Activated CD4-positive, alpha-beta memory T cell treated with anti-CD3 and anti-CD28 coated beads for 36 hours (primary cell): ENCODE measurements at regions of chr9 and their contacts with region 1.

Region 1: DNA sequence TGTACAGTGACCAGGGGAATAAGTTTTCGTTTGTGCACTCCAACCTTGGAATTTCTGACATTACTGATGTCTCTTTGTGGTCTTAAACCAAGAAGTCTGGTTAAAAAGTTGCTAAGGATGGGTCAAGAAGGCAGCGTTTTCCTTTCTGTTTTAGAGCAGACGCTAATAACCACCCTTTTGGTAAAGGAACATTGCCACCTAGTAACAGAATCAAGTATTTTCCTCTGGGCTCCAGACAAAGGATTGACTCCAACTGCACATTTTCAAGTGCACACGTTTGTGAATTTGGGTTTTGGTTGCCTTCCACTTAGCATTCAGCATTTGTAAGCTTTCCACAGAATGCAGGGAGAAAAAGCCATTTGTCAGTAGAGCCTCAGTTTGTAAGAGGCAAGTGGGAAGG is 22.2 kb upstream of the CEP78 start:
- DNase-seq: no peak
- H3K4me3 Mint-ChIP-seq: no peak overlapping the region
- H3K27ac Mint-ChIP-seq: no peak overlapping the region
- H3K4me1 Mint-ChIP-seq: peaks cover 40% of the 10 kb centered on the region
- H3K27me3 Mint-ChIP-seq: no peaks in the 10 kb centered on the region

Region 2: DNA sequence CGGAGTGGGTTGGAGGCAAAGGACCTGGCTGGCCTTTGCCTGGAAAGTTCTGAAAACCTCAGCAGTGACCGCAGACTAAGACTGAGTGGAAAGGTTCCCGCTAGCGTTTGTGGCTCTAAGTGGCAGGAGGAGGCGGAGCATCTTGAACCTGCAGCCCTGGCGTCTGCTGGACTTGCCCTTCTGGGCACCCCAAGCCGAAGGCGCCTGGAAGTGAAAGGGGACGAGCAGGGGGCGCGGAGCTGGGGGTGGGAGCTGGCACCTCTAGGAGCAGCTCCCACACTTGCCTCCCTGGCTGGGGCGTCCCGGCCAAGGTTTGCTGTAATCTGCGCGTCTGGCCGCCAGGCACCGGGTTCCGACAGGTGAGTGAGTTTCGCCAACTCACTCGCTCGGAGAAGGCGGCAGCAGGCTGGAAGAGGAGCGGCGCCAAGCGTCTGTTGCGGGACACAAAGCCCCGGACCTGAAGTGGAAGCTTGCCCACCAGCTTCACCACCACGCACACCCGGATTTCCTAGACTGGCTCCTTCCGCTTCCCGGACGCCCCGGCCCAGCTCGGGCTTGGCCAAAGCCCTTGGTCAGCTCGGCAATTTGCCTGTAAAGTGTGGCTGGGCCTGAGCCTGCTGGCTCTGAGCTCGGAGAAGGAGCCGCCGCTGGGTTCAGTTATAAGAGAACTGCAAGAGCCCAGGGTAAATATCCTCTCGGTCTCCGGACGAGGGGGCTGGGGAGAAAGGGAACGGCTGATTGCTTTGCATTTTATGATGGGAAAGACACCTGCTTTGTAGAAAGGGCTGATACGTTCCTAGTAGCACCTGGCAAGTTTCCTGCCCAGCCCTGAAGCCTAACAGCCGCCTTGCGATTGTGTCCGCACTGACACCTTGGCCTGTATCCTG is 565.2 kb before region 1 on chr9 and contains the start of gene GNA14:
- CTCF ChIA-PET with region 1: no interaction called
- POLR2A ChIA-PET with region 1: no interaction called
- intact Hi-C with region 1: loop called (anchors 5 kb)
- DNase-seq: peak; percentile 18
- H3K4me3 Mint-ChIP-seq: peak within 1 kb of the TSS; percentile 65
- H3K27ac Mint-ChIP-seq: no peak within 1 kb of the TSS
- H3K4me1 Mint-ChIP-seq: peaks cover 14% of the 10 kb centered on the region
- H3K27me3 Mint-ChIP-seq: peaks cover 35% of the 10 kb centered on the region
- total RNA-seq, gene GNA14: not detected

Region 3: DNA sequence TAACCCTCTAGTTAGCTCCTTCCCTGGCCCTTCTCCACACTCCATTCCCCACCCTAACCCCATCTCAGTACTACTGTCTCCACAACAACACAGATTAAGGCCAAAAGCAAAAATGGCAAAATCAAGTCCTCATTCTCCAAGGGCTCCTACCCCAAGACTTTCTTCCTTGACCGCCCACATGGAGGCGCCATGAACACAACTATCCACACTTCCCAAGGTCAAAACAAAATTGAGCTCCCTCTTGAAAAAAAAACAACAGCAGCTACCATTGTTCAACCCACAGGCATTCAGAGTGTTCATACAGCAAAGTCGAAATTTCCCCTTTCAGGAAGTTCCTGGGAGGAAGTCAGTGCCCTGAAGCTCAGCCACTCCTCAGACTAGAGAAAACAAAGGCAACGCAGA is 236.5 kb before region 1 on chr9:
- CTCF ChIA-PET with region 1: no interaction called
- POLR2A ChIA-PET with region 1: no interaction called
- intact Hi-C with region 1: loop called (anchors 1 kb)
- DNase-seq: peak; percentile 72
- H3K4me3 Mint-ChIP-seq: no peak overlapping the region
- H3K27ac Mint-ChIP-seq: peak overlapping the region; percentile 31
- H3K4me1 Mint-ChIP-seq: peaks cover 51% of the 10 kb centered on the region
- H3K27me3 Mint-ChIP-seq: no peaks in the 10 kb centered on the region

Region 4: GRCh38 chr9:78130004-78130403 is 83.7 kb before region 1 on chr9:
- CTCF ChIA-PET with region 1: no interaction called
- POLR2A ChIA-PET with region 1: no interaction called
- intact Hi-C with region 1: loop called (anchors 2 kb)
- DNase-seq: no peak
- H3K4me3 Mint-ChIP-seq: no peak overlapping the region
- H3K27ac Mint-ChIP-seq: no peak overlapping the region
- H3K4me1 Mint-ChIP-seq: peaks cover 19% of the 10 kb centered on the region
- H3K27me3 Mint-ChIP-seq: peaks cover 2% of the 10 kb centered on the region